ENCODE measurements at regions of chr5 and their contacts with region 1.

Region 1: GRCh38 chr5:1948663-1949652 is 66.2 kb upstream of the IRX4 start:
- DNase-seq: peak; percentile 87
- ATAC-seq: peak; percentile 89

Region 2: GRCh38 chr5:1431021-1431811 is 517.7 kb before region 1 on chr5:
- intact Hi-C with region 1: no loop called
- DNase-seq: peak; percentile 6
- ATAC-seq: no peak

Region 3: DNA sequence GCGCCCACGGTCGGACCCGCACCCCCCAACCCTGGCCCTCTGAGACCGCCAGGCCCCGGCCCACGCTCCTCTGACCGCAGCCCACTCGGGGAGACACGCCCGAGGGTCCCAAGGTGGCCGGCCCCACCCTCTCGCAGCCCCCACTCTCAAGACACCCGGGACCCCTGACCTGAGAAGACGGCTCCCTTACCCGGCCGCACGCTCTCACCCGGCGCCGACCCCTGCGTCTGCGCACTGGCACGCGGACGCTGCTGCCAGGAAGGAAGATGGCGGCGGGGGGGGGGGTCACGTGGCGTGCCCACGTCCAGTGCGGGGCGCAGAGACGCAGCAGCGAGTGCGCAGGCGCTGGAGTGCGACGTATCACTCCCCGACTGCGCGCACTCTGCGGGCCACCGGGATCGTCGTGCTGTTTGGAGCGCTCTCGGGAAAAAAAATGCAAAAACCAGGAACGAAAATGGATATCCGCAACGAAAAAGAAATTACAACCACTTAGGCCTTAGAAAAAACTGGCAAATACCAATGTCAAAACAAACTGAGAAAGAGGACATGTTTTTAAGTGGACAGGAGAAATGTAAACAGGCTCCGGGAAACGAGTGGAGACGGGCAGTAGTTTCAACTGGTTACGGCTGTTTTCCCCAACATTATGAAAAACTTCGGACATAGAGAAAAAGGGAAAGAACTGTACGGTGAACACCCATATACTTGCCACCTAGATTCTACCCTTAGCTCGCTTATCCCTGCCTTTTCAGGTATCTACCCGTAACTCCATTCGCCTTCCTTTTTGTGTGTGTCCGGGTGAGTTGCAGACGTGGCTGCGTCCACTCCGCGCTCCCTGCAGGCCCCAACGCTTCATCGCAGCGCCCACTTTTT is 149.1 kb before region 1 on chr5 and contains the start of gene MRPL36:
- intact Hi-C with region 1: loop called (anchors 5 kb)
- DNase-seq: peak; percentile 97
- ATAC-seq: peak; percentile 92
- total RNA-seq, gene MRPL36: 65.5 TPM

Region 4: DNA sequence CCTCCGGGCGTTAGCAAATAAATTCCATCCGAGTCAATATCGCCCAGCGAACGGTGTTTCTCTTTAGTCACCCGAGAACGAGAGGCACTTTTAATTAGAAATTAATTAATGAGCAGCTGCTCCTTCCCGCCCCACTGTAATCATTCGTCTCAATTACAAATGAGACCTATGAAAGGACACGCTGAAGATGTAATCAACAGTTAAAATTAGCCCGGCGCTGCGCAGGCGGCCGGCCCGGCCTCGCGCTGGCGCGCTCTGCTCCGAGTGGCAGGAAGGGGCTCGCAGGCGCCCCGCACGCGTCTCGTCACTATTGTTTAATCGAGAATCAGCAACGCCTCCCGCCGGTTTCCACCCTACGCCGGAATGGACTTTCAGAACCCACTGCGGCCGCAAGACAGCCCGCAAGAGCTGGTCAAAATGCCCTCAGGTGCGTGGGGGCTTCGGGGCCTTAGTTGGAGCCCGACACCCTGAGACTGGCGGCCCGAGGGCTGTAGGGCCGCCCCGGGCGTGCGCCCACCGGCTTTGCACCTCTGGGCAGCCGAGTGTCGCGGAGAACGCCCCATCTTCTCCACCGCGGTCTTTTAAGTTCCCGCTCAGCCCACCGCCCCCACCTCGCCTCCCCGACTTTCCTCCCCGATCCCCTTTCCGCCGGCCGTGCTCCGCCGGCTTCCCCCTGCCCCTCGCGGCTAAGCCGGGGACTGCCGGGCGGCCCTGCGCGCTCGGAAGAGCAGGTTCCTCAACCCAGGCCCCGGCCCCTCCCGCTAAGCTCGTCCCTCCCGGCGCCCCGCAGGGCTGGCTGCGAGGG is 65.6 kb before region 1 on chr5:
- intact Hi-C with region 1: no loop called
- DNase-seq: peak; percentile 53
- ATAC-seq: peak; percentile 62

Measured in Right ventricle myocardium superior (tissue), 1 donor.